Right lobe of liver (tissue), 6 donors: ENCODE measurements at regions of chr18 and their contacts with region 1.

Region 1: GRCh38 chr18:35253655-35254287 is 12.9 kb downstream of the ZNF397 start:
- DNase-seq: no peak
- ATAC-seq: no peak
- H3K4me3 ChIP-seq: no peak overlapping the region
- H3K27ac ChIP-seq: no peak overlapping the region
- H3K4me1 ChIP-seq: no peaks in the 10 kb centered on the region
- H3K27me3 ChIP-seq: no peaks in the 10 kb centered on the region
- CTCF ChIP-seq: no peak
- POLR2A ChIP-seq: no peak

Region 2: DNA sequence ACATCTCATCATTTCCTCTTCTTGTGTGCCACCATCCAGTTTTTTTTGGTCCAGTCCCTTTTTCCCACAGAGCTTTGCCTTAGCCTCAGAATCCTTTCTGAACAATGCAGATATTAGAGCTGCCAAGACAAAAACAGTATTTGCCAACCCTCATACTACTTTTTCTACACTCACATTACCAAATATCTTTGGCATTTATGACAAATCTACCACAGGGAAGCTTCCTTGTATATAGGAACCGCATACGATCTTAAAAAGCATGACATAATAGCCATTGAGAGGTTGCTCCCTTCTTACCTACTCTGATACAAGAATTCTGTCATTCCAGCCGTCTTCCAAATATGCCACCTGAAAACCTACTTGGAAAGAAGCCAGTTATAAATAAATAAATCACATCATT is 81.0 kb after region 1 on chr18:
- intact Hi-C with region 1: loop called (anchors 10 kb)
- DNase-seq: no peak
- ATAC-seq: no peak
- H3K4me3 ChIP-seq: no peak overlapping the region
- H3K27ac ChIP-seq: no peak overlapping the region
- H3K4me1 ChIP-seq: peaks cover 0 to 10% (median 0%) of the 10 kb centered on the region in 4 donors
- H3K27me3 ChIP-seq: no peaks in the 10 kb centered on the region
- CTCF ChIP-seq: no peak
- POLR2A ChIP-seq: no peak